ENCODE measurements at regions of chr22 and their contacts with region 1.

Region 1: DNA sequence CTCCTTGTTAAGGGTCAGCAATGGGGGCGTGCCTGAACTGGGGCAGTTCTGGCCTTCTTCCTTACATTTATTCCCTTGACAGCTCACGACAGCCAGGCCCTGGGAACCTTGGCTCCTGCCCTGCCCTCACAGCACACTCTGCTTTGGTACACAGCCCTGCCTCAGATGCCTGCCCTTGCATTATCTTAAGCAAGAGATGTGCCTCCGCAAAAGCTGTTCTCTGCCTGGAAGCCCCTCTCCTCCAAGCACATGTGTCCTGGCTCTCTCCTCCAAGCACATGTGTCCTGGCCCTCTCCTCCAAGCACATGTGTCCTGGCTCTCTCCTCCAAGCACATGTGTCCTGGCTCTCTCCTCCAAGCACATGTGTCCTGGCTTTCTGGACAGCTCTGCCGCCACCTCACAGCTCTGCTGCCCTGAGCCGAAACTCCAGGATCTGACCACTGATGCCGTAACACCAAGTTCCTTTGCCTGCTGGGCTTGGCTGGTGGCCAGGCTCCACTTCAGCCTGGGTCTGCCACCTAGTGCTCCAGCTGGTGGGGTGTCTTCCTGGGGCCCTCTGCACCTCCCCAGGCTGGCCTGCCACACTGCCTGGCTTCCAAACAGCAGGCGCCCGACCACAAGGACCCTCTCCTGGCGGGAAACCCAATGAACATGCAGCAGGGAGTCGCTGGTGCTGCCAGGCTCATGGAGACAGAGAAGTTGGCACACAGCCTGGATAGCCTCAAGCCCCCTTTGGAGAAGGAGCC is 53.0 kb downstream of the SCUBE1 start:
- DNase-seq: peak in 4 of 7 donors; percentile 28 to 57 (median 44)
- H3K4me3 ChIP-seq: peak overlapping the region in 1 of 4 donors; percentile 1
- H3K27ac ChIP-seq: peak overlapping the region in 2 of 5 donors; percentile 65 to 71
- H3K4me1 ChIP-seq: peaks cover 0 to 32% of the 10 kb centered on the region in 2 donors
- H3K27me3 ChIP-seq: no peaks in the 10 kb centered on the region
- CTCF ChIP-seq: no peak
- POLR2A ChIP-seq: no peak

Region 2: DNA sequence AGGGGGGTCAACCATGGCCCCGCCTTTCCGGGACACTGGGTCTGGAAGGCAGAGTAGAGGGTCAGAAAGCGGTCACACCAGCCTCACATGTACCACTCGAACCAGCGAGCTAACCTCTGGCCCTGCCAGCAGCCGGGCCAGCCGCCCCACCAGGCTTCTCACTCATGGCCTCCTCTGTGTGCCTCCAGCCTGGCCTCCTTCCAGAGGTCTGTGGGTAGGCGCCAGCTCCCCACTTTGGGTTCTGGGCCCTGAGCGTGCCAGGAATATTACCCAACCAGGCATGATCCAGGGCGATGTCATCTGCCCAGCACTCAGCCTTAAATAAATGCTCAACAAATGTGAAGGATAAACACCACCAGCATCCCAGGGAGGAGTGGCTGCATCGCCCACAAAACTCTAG is 47.2 kb after region 1 on chr22:
- intact Hi-C with region 1: loop called in 1 of 2 experiments (anchors 10 kb)
- DNase-seq: peak in 3 of 7 donors; percentile 26 to 64 (median 26)
- H3K4me3 ChIP-seq: no peak overlapping the region
- H3K27ac ChIP-seq: no peak overlapping the region
- H3K4me1 ChIP-seq: no peaks in the 10 kb centered on the region
- H3K27me3 ChIP-seq: no peaks in the 10 kb centered on the region
- CTCF ChIP-seq: no peak
- POLR2A ChIP-seq: no peak

Measured in adrenal gland (tissue), 19 donors.